Calu3 (cell line): ENCODE measurements at regions of chr12 and their contacts with region 1.

Region 1: DNA sequence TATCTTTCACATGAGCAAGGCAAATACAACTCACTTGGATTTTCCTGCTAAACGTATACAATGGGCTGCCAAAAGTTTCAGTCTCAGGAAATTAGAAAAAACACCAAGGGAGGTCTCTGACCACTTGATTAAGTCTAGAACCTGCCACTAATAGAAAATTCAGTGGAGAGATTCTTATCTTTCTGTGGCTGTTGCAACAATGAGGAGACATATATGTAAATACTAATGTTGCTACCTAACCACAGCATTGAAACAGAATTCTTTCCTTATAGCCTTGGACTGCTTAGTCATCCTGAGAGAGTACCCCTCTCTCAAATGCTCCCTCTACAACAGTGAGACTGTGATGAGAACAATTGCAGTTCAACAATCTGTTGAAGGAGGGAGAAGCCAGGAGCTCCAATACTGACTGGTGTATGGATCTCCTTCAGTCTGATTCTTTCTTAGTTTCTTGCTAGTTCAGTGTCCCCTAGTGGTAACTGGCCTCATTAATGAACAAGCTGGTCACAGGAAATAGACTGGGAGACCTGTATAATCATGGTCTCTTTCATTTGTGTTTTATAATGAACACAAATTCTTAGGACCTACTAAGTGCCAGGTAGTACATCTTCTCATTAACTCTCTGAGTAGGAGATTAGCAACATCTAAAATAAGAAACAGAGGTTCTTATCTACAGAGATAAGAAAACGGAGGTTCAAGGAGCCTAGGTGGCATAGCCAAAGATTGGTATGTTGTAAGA is 164.5 kb downstream of the SLC38A4 start:
- DNase-seq: peak; percentile 17
- H3K4me3 Mint-ChIP-seq: no peak overlapping the region
- H3K27ac Mint-ChIP-seq: peak overlapping the region; percentile 33
- H3K4me1 Mint-ChIP-seq: peaks cover 50% of the 10 kb centered on the region
- H3K27me3 Mint-ChIP-seq: no peaks in the 10 kb centered on the region
- CTCF ChIP-seq: peak; percentile 38

Region 2: GRCh38 chr12:46342562-46343033 is 318.7 kb before region 1 on chr12:
- CTCF ChIA-PET with region 1: no interaction called
- intact Hi-C with region 1: loop called (anchors 5 kb)
- DNase-seq: peak; percentile 23
- H3K4me3 Mint-ChIP-seq: no peak overlapping the region
- H3K27ac Mint-ChIP-seq: peak overlapping the region; percentile 15
- H3K4me1 Mint-ChIP-seq: peaks cover 17% of the 10 kb centered on the region
- H3K27me3 Mint-ChIP-seq: no peaks in the 10 kb centered on the region
- CTCF ChIP-seq: peak; percentile 30

Region 3: GRCh38 chr12:46364777-46365580 is 296.3 kb before region 1 on chr12:
- CTCF ChIA-PET with region 1: interaction called, 3 read pairs
- intact Hi-C with region 1: loop called (anchors 5 kb)
- DNase-seq: peak; percentile 62
- H3K4me3 Mint-ChIP-seq: peak overlapping the region; percentile 53
- H3K27ac Mint-ChIP-seq: peak overlapping the region; percentile 50
- H3K4me1 Mint-ChIP-seq: peaks cover 16% of the 10 kb centered on the region
- H3K27me3 Mint-ChIP-seq: no peaks in the 10 kb centered on the region
- CTCF ChIP-seq: no peak

Region 4: DNA sequence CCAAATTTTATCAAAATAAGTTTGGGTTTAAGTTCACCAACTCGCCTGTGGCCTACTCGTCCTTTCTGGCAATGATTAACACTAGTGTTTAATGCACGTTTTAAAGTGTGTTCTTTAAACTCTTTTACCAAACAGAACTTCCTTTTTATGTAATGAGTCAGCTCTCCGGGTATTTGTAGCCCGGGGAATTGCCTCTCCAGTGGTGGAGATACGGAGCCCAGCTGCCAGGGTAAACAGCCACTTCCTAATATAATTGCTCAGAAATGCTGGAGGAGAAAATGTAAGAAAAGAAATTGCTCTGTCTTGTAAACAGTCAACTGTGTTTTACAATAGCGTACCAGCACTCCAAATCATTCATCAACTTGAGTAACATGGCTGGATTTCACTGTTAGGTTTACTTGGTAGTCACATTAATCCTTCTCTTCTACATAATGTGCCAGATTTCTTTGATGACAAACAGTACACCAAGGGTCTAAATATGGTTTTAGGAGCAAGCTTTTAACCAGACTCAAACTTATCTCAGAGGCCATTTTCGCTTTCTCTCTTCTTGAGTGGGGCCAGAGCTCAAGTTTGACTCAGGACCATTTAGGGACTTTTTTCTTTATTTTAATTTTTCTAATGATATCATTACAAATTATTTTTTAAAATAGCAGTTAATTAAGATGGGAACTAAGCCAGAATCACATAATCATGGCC is 187.5 kb before region 1 on chr12:
- CTCF ChIA-PET with region 1: no interaction called
- intact Hi-C with region 1: loop called (anchors 5 kb)
- DNase-seq: peak; percentile 56
- H3K4me3 Mint-ChIP-seq: peak overlapping the region; percentile 36
- H3K27ac Mint-ChIP-seq: peak overlapping the region; percentile 64
- H3K4me1 Mint-ChIP-seq: peaks cover 49% of the 10 kb centered on the region
- H3K27me3 Mint-ChIP-seq: no peaks in the 10 kb centered on the region
- CTCF ChIP-seq: no peak

Region 5: GRCh38 chr12:46492471-46493351 is 168.6 kb before region 1 on chr12:
- CTCF ChIA-PET with region 1: no interaction called
- intact Hi-C with region 1: loop called (anchors 2 kb)
- DNase-seq: peak; percentile 45
- H3K4me3 Mint-ChIP-seq: peak overlapping the region; percentile 15
- H3K27ac Mint-ChIP-seq: peak overlapping the region; percentile 89
- H3K4me1 Mint-ChIP-seq: peaks cover 30% of the 10 kb centered on the region
- H3K27me3 Mint-ChIP-seq: no peaks in the 10 kb centered on the region
- CTCF ChIP-seq: no peak

Region 6: GRCh38 chr12:46650607-46651088 is 10.6 kb before region 1 on chr12:
- CTCF ChIA-PET with region 1: no interaction called
- intact Hi-C with region 1: no loop called
- DNase-seq: no peak
- H3K4me3 Mint-ChIP-seq: no peak overlapping the region
- H3K27ac Mint-ChIP-seq: no peak overlapping the region
- H3K4me1 Mint-ChIP-seq: no peaks in the 10 kb centered on the region
- H3K27me3 Mint-ChIP-seq: no peaks in the 10 kb centered on the region
- CTCF ChIP-seq: no peak